Activated CD4-positive, alpha-beta memory T cell treated with anti-CD3 and anti-CD28 coated beads, Interleukin-2, amount 10 ng/mL, durations not matched to agents 7 days and 5 days (primary cell): ENCODE measurements at regions of chr17 and their contacts with region 1.

Region 1: DNA sequence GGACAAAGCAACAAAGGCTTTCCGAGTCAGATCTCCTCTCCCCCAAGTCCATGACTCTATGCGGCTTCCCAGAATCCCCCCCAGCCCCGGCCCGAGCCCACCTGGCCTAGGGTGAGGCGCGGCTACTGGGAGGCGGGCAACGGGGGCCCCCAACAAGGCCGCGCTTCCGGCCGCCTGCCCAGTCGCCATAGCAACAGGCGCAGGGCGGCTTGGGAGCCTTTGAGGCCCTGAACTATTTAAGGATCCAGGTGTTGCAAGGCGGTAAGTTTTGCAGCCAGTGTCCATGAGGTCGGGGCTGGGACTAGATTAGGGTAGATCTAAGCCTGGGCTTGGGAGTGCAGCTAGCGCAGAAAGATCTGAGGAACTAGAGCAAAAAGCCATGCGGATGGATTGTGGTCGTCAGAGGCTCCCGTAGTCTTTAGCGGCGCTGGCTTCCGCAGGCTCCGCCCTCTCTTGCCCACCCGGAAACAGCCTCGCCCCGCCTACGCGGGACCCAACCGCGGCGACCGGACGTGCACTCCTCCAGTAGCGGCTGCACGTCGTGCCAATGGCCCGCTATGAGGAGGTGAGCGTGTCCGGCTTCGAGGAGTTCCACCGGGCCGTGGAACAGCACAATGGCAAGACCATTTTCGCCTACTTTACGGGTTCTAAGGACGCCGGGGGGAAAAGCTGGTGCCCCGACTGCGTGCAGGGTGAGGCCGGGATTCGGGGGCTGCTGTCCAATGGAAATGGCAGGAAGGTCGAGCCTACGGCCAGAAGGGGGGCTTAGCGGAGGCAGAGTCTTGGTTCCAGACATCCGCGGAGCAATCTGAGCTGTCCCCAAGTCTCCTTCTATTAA is at the starts of genes KIAA0753 and TXNDC17:
- DNase-seq: peak; percentile 95
- H3K4me3 Mint-ChIP-seq: peak within 1 kb of the TSS; percentile 88
- H3K27ac Mint-ChIP-seq: peak within 1 kb of the TSS; percentile 90
- H3K4me1 Mint-ChIP-seq: peaks cover 58% of the 10 kb centered on the region
- H3K27me3 Mint-ChIP-seq: no peaks in the 10 kb centered on the region
- total RNA-seq, gene KIAA0753: 13.0 to 14.6 TPM
- total RNA-seq, gene TXNDC17: 70.6 to 71.1 TPM

Region 2: GRCh38 chr17:6651357-6651918 is 10.7 kb after region 1 on chr17 and contains the starts of genes C17orf100 and MED31:
- CTCF ChIA-PET with region 1: interaction called, 17 read pairs
- POLR2A ChIA-PET with region 1: interaction called, 71 read pairs
- DNase-seq: peak; percentile 96
- H3K4me3 Mint-ChIP-seq: peak within 1 kb of the TSS; percentile 91
- H3K27ac Mint-ChIP-seq: peak within 1 kb of the TSS; percentile 95
- H3K4me1 Mint-ChIP-seq: peaks cover 65% of the 10 kb centered on the region
- H3K27me3 Mint-ChIP-seq: no peaks in the 10 kb centered on the region
- total RNA-seq, gene C17orf100: 1.1 to 1.9 TPM
- total RNA-seq, gene MED31: 26.0 to 26.3 TPM

Region 3: DNA sequence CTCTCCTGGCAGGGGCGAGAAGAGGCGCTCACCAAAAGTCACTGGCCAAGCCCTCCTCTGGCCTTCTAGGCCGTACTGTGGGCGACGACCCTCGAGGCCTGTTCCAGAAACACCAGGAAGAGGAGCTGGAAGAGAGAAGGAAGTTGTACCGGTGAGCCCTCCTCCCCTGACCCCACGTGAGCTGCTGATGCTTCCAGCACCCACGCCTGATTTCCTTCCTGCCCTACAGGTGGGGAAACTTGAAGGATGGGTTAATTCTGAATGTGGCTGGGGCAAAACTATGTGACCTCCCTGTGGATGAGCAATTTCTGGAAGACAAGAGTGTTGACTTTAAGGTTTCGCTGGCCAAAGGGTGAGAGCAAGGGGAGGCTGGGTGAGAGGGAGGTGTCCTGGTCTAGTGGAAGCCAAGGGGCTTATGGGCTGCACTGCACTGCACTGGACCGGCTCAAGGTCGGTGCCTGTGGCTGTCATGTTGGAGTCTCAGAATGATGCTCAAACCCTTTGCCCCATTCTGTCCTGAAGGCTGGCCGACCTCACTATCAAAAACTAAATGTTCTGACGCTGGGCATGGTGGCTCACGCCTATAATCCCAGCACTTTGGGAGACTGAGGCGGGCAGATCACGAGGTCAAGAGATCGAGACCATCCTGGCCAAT is 17.0 kb after region 1 on chr17:
- CTCF ChIA-PET with region 1: interaction called, 3 read pairs
- POLR2A ChIA-PET with region 1: interaction called, 15 read pairs
- DNase-seq: no peak
- H3K4me3 Mint-ChIP-seq: peak overlapping the region; percentile 83
- H3K27ac Mint-ChIP-seq: peak overlapping the region; percentile 65
- H3K4me1 Mint-ChIP-seq: peaks cover 60% of the 10 kb centered on the region
- H3K27me3 Mint-ChIP-seq: no peaks in the 10 kb centered on the region

Region 4: GRCh38 chr17:6755731-6756184 is 115.0 kb after region 1 on chr17 and contains the start of gene XAF1:
- CTCF ChIA-PET with region 1: interaction called, 3 read pairs
- POLR2A ChIA-PET with region 1: interaction called, 12 read pairs
- DNase-seq: peak; percentile 81
- H3K4me3 Mint-ChIP-seq: peak within 1 kb of the TSS; percentile 95
- H3K27ac Mint-ChIP-seq: peak within 1 kb of the TSS; percentile 96
- H3K4me1 Mint-ChIP-seq: peaks cover 66% of the 10 kb centered on the region
- H3K27me3 Mint-ChIP-seq: peaks cover 2% of the 10 kb centered on the region
- total RNA-seq, gene XAF1: 408 TPM